Thyroid gland (tissue), 4 donors: ENCODE measurements at regions of chr19 and their contacts with region 1.

Region 1: DNA sequence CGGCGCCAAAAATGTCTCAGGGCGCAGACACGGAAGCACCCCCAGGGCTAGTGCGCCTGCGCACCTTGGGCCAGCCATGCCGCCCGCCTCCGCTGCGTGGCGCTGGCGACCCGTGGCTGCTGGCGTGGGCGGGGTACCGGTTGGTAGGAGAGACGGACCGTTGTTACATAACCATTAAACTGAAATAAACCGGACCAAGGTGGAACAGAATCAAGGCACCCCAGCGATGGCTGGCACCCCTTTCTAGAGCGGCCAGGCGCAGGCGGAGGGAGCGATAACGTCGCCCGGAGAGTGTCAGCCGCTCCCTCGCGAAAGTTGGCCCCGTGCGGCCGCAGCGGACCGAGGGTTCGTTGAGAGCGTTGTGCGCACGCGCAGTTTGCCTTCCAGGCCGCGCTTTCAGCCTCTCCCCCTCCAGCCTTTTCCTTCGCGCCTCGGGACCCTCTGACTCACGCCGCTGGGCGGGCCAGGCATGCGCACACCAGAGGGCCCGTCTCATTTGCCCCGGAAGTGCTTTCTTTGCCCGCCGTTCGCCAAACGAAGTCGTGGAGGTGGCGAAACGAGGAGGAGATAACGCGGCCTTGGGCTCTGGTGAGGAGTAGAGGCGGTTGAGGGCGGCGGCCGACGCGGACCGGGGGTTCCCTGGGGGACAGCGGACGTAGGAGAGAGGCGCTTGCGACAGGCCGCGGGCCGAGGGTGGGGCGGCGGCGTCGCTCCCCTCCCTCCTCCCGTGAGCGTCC is at the starts of genes PLEKHJ1 and SF3A2:
- DNase-seq: peak; percentile 95 to 96
- H3K4me3 ChIP-seq: peak within 1 kb of the TSS; percentile 70 to 92 (median 86)
- H3K27ac ChIP-seq: peak within 1 kb of the TSS; percentile 96 to 99 (median 98)
- H3K4me1 ChIP-seq: peaks cover 50 to 61% of the 10 kb centered on the region in 2 donors
- H3K27me3 ChIP-seq: no peaks in the 10 kb centered on the region
- CTCF ChIP-seq: peak; percentile 97 to 100 (median 99)
- POLR2A ChIP-seq: peak in 1 of 2 donors; percentile 70
- total RNA-seq, gene PLEKHJ1: 86.7 to 179 (median 131) TPM
- total RNA-seq, gene SF3A2: 25.7 to 39.8 (median 30.3) TPM

Region 2: GRCh38 chr19:2061495-2062381 is 174.7 kb before region 1 on chr19:
- intact Hi-C with region 1: no loop called
- DNase-seq: peak; percentile 100
- H3K4me3 ChIP-seq: peak overlapping the region in 2 of 3 donors; percentile 73 to 81
- H3K27ac ChIP-seq: peak overlapping the region; percentile 96 to 100 (median 100)
- H3K4me1 ChIP-seq: peaks cover 32 to 48% of the 10 kb centered on the region in 2 donors
- H3K27me3 ChIP-seq: no peaks in the 10 kb centered on the region
- CTCF ChIP-seq: peak in 1 of 6 experiments; percentile 20
- POLR2A ChIP-seq: peak in 1 of 2 donors; percentile 7

Region 3: GRCh38 chr19:2096480-2097329 is 139.8 kb before region 1 on chr19 and contains the start of gene IZUMO4:
- intact Hi-C with region 1: no loop called
- DNase-seq: peak; percentile 99
- H3K4me3 ChIP-seq: peak within 1 kb of the TSS; percentile 70 to 89 (median 83)
- H3K27ac ChIP-seq: peak within 1 kb of the TSS; percentile 95 to 99 (median 97)
- H3K4me1 ChIP-seq: peaks cover 13 to 16% of the 10 kb centered on the region in 2 donors
- H3K27me3 ChIP-seq: no peaks in the 10 kb centered on the region
- CTCF ChIP-seq: peak in 4 of 6 experiments; percentile 19 to 53 (median 36)
- POLR2A ChIP-seq: peak in 1 of 2 donors; percentile 46
- total RNA-seq, gene IZUMO4: 1.1 to 4.2 (median 2.9) TPM

Region 4: DNA sequence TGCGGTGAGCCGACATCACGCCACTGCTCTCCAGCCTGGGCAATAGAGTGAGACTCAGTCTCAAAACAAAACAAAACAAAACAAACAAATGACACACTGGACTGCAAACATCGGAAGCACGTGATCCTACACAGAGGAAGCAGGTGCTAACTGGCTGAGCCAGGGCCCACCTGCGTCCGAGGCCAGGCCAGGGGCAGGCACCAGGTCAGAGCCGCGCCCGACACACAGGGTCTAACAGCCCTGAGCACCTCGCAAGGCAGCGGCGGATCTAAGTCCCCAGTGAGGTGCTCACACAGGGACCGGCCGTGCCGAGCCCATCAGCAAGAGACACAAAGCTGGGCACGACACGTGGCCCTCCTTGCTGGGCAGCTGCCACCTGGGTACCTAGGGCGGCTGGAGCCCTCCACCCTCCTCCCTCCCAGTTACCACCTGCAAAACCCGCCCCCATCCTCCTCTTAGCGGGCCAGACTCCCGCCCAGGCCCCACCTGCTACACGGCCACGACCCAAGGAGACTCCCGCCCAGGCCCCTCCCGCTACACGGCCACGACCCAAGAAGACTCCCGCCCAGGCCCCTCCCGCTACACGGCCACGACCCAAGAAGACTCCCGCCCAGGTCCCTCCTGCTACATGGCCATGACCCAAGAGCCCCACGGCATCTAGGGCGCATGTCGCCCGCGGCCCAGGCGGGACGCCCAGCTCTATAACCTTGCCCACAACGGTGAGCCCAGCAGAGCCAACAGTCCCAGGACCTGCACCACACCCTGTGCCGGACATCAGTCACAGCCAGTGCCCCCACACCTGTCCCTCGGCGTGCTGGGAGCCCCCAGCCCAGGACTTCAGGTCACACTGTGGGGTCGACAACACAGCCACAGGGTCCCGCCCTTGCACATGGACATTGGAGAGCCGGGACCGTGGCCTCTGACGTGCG is 100.7 kb before region 1 on chr19:
- intact Hi-C with region 1: no loop called
- DNase-seq: no peak
- H3K4me3 ChIP-seq: no peak overlapping the region
- H3K27ac ChIP-seq: no peak overlapping the region
- H3K4me1 ChIP-seq: no peaks in the 10 kb centered on the region
- H3K27me3 ChIP-seq: no peaks in the 10 kb centered on the region
- CTCF ChIP-seq: no peak
- POLR2A ChIP-seq: no peak

Region 5: GRCh38 chr19:2164020-2164998 is 72.2 kb before region 1 on chr19:
- intact Hi-C with region 1: loop called (anchors 5 kb)
- DNase-seq: peak; percentile 26 to 34
- H3K4me3 ChIP-seq: peak overlapping the region; percentile 18 to 91 (median 66)
- H3K27ac ChIP-seq: peak overlapping the region; percentile 81 to 98 (median 93)
- H3K4me1 ChIP-seq: peaks cover 35 to 47% of the 10 kb centered on the region in 2 donors
- H3K27me3 ChIP-seq: no peaks in the 10 kb centered on the region
- CTCF ChIP-seq: no peak
- POLR2A ChIP-seq: no peak

Region 6: GRCh38 chr19:2273356-2274184 is 37.1 kb after region 1 on chr19:
- intact Hi-C with region 1: loop called (anchors 2 kb)
- DNase-seq: peak; percentile 64 to 69
- H3K4me3 ChIP-seq: no peak overlapping the region
- H3K27ac ChIP-seq: peak overlapping the region; percentile 16 to 70 (median 60)
- H3K4me1 ChIP-seq: peaks cover 12 to 41% of the 10 kb centered on the region in 2 donors
- H3K27me3 ChIP-seq: no peaks in the 10 kb centered on the region
- CTCF ChIP-seq: peak; percentile 76 to 99 (median 92)
- POLR2A ChIP-seq: no peak

Region 7: GRCh38 chr19:2332341-2333026 is 96.0 kb after region 1 on chr19:
- intact Hi-C with region 1: loop called (anchors 5 kb)
- DNase-seq: peak in 1 of 2 donors; percentile 10
- H3K4me3 ChIP-seq: no peak overlapping the region
- H3K27ac ChIP-seq: no peak overlapping the region
- H3K4me1 ChIP-seq: peaks cover 34 to 51% of the 10 kb centered on the region in 2 donors
- H3K27me3 ChIP-seq: no peaks in the 10 kb centered on the region
- CTCF ChIP-seq: no peak
- POLR2A ChIP-seq: no peak